GM12878 (cell line): ENCODE measurements at regions of chr1 and their contacts with region 1.

Region 1: GRCh38 chr1:221643404-221644144 is 98.3 kb downstream of the DUSP10 start:
- DNase-seq: peak; percentile 47
- ATAC-seq: peak; percentile 87
- H3K4me3 ChIP-seq: peak overlapping the region; percentile 29; the same call in 1 of the 2 replicates
- H3K27ac ChIP-seq: peak overlapping the region; percentile 74
- H3K4me1 ChIP-seq: peaks cover 18% of the 10 kb centered on the region
- H3K27me3 ChIP-seq: no peaks in the 10 kb centered on the region
- CTCF ChIP-seq: no peak
- EP300 ChIP-seq: no peak
- POLR2A ChIP-seq: no peak
- RAD21 ChIP-seq: no peak

Region 2: DNA sequence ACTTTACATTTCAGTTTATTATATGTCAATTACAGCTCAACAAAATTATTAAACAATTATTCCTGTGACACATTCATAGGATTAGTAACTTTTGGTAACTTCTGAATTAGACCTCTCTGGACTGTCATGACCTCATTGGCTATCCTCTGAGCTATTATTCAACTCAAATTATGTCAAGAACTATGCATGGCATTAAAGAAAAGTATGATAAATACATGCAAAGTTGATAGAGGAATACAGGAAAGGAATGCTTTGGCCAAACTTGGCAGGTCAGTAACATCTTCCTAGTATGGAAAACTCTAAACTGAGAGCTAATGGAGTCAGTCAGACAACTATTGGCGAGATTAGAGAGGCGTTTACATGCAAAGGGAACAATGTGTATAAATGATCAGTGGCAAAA is 60.1 kb before region 1 on chr1:
- CTCF ChIA-PET with region 1: no interaction called
- POLR2A ChIA-PET with region 1: no interaction called
- RAD21 ChIA-PET with region 1: no interaction called
- SMC1A ChIA-PET with region 1: no interaction called
- in situ Hi-C with region 1: no loop called
- intact Hi-C with region 1: no loop called
- DNase-seq: no peak
- ATAC-seq: no peak
- H3K4me3 ChIP-seq: no peak overlapping the region
- H3K27ac ChIP-seq: no peak overlapping the region
- H3K4me1 ChIP-seq: no peaks in the 10 kb centered on the region
- H3K27me3 ChIP-seq: no peaks in the 10 kb centered on the region
- CTCF ChIP-seq: no peak
- EP300 ChIP-seq: no peak
- POLR2A ChIP-seq: no peak
- RAD21 ChIP-seq: no peak

Region 3: GRCh38 chr1:221598122-221598521 is 45.5 kb before region 1 on chr1:
- CTCF ChIA-PET with region 1: no interaction called
- POLR2A ChIA-PET with region 1: no interaction called
- RAD21 ChIA-PET with region 1: no interaction called
- SMC1A ChIA-PET with region 1: no interaction called
- in situ Hi-C with region 1: no loop called
- intact Hi-C with region 1: no loop called
- DNase-seq: no peak
- ATAC-seq: no peak
- H3K4me3 ChIP-seq: no peak overlapping the region
- H3K27ac ChIP-seq: no peak overlapping the region
- H3K4me1 ChIP-seq: no peaks in the 10 kb centered on the region
- H3K27me3 ChIP-seq: no peaks in the 10 kb centered on the region
- CTCF ChIP-seq: no peak
- EP300 ChIP-seq: no peak
- POLR2A ChIP-seq: no peak
- RAD21 ChIP-seq: no peak

Region 4: GRCh38 chr1:221655766-221656305 is 12.3 kb after region 1 on chr1:
- CTCF ChIA-PET with region 1: interaction called, 4 read pairs
- POLR2A ChIA-PET with region 1: interaction called, 6 read pairs
- RAD21 ChIA-PET with region 1: no interaction called
- SMC1A ChIA-PET with region 1: interaction called, 29 read pairs
- in situ Hi-C with region 1: no loop called
- intact Hi-C with region 1: no loop called
- DNase-seq: no peak
- ATAC-seq: no peak
- H3K4me3 ChIP-seq: no peak overlapping the region
- H3K27ac ChIP-seq: no peak overlapping the region
- H3K4me1 ChIP-seq: no peaks in the 10 kb centered on the region
- H3K27me3 ChIP-seq: no peaks in the 10 kb centered on the region
- CTCF ChIP-seq: no peak
- EP300 ChIP-seq: no peak
- POLR2A ChIP-seq: no peak
- RAD21 ChIP-seq: no peak

Region 5: GRCh38 chr1:221667504-221667903 is 23.9 kb after region 1 on chr1:
- CTCF ChIA-PET with region 1: interaction called, 11 read pairs
- POLR2A ChIA-PET with region 1: interaction called, 4 read pairs
- RAD21 ChIA-PET with region 1: interaction called, 8 read pairs
- SMC1A ChIA-PET with region 1: interaction called, 21 read pairs
- in situ Hi-C with region 1: no loop called
- intact Hi-C with region 1: no loop called
- DNase-seq: peak; percentile 72
- ATAC-seq: peak; percentile 98
- H3K4me3 ChIP-seq: no peak overlapping the region
- H3K27ac ChIP-seq: peak overlapping the region; percentile 59
- H3K4me1 ChIP-seq: peaks cover 4% of the 10 kb centered on the region; the same call in 1 of the 2 replicates
- H3K27me3 ChIP-seq: no peaks in the 10 kb centered on the region
- CTCF ChIP-seq: no peak
- EP300 ChIP-seq: peak; percentile 71 to 75
- POLR2A ChIP-seq: no peak
- RAD21 ChIP-seq: 0 out of 2 replicates have a peak, but pooled peaks have one; percentile 19

Region 6: DNA sequence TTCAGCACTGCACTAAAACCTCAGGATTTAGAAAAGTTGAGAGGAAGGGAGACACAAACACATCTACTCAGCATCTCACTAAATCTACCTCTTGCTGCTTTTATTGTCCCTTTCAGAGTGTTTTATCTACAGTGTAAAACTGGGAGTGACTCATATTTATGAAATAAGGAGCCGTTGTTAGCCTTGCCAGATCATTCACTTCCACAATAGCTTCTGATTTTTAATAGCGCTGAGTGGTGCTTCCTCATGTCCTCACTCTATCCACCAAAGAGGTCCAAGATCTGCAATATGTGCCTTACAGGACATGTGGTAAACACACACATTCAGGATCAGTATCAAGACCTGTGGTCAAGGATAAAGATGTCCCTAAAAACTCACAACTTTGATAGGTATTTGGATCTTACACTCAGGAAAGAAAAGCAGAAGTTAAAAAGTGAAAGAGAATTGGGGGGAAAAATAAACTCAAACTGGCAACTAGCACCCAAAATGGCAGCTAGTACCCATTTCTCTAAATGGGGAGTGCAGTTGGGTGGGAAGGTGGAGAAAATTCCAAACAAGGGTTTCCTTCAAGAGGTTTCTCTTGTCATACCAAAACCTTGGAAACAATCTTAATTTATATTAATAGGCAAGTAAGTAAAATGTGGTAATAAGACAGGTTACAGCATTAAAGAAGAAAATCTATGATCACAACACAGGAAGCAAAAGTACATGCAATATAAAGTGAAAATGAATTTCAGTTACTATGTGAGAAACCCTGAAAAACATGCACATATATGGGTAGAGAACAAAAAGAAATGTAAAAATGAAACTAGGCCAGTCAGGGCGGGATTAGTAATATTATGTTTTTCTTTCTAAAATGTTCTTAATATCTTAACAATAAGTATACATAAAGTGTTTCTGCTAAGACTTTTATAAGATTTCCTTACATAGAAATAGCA is 82.4 kb after region 1 on chr1:
- CTCF ChIA-PET with region 1: no interaction called
- POLR2A ChIA-PET with region 1: interaction called, 3 read pairs
- RAD21 ChIA-PET with region 1: interaction called, 7 read pairs
- SMC1A ChIA-PET with region 1: interaction called, 13 read pairs
- in situ Hi-C with region 1: no loop called
- intact Hi-C with region 1: no loop called
- DNase-seq: no peak
- ATAC-seq: peak; percentile 67
- H3K4me3 ChIP-seq: peak overlapping the region; percentile 6; the same call in 1 of the 2 replicates
- H3K27ac ChIP-seq: peak overlapping the region; percentile 92
- H3K4me1 ChIP-seq: peaks cover 52% of the 10 kb centered on the region
- H3K27me3 ChIP-seq: no peaks in the 10 kb centered on the region
- CTCF ChIP-seq: no peak
- EP300 ChIP-seq: no peak
- POLR2A ChIP-seq: no peak
- RAD21 ChIP-seq: no peak

Region 7: GRCh38 chr1:221736714-221737113 is 93.1 kb after region 1 on chr1:
- CTCF ChIA-PET with region 1: interaction called, 5 read pairs
- POLR2A ChIA-PET with region 1: interaction called, 4 read pairs
- RAD21 ChIA-PET with region 1: interaction called, 40 read pairs
- SMC1A ChIA-PET with region 1: interaction called, 8 read pairs
- in situ Hi-C with region 1: no loop called
- intact Hi-C with region 1: no loop called
- DNase-seq: no peak
- ATAC-seq: peak; percentile 47
- H3K4me3 ChIP-seq: peak overlapping the region; percentile 90
- H3K27ac ChIP-seq: no peak overlapping the region
- H3K4me1 ChIP-seq: peaks cover 11% of the 10 kb centered on the region
- H3K27me3 ChIP-seq: no peaks in the 10 kb centered on the region
- CTCF ChIP-seq: no peak
- EP300 ChIP-seq: no peak
- POLR2A ChIP-seq: 0 out of 2 replicates have a peak, but pooled peaks have one; percentile 25
- RAD21 ChIP-seq: no peak

Region 8: GRCh38 chr1:221829327-221830015 is 185.9 kb after region 1 on chr1:
- CTCF ChIA-PET with region 1: no interaction called
- POLR2A ChIA-PET with region 1: no interaction called
- RAD21 ChIA-PET with region 1: no interaction called
- SMC1A ChIA-PET with region 1: no interaction called
- in situ Hi-C with region 1: no loop called
- intact Hi-C with region 1: no loop called
- DNase-seq: no peak
- ATAC-seq: peak; percentile 82
- H3K4me3 ChIP-seq: no peak overlapping the region
- H3K27ac ChIP-seq: no peak overlapping the region
- H3K4me1 ChIP-seq: peaks cover 8% of the 10 kb centered on the region
- H3K27me3 ChIP-seq: no peaks in the 10 kb centered on the region
- CTCF ChIP-seq: no peak
- EP300 ChIP-seq: no peak
- POLR2A ChIP-seq: no peak
- RAD21 ChIP-seq: no peak